ENCODE measurements at regions of chr5 and their contacts with region 1.

Region 1: DNA sequence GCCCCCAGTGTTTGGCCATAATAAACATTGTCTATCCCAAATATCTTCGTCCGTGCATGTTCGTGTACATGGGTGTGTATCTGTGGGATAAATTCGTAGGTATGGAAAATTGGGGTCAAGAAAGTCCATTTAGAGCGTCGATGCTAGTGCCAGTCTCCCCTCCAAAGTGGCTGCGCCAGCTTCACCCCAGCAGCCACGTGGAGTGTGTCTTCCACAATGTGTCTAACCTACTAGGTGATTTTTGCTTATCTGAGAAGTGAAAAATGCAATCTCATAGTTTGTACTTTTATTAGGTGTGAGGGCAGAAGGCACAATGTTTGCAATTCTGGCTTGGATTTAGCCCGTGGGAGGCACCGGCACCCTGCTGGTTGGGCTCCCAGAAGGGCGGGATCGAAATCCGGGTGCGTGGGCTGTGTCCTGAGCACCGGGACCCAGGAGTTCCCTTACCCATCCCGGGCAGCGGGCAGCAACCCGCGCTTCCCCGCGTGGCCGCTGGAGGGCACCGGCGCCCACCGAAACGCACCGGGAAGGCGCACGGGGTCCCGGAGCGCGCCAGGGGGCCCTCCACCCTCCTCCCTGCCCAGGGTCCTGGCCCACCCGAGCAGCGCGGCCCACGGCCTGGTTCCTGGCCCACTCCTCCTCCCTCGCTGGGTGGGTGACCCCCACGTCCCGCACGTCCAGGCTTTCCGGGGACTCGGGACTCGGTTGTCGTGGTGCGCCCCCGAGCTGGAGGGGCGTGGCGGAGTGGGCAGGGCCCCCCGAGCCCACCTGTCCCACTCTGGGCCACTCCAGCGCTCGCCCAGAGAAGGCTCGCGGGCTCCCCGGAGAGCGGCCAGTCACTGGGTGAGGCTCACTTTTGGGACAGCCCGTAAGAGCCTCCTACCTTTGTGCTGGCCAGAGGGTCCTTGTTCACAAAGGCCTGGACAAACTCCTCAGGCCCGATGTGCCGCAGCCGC is 55.4 kb upstream of the RNF130 start:
- DNase-seq: peak; percentile 15 to 49
- H3K4me3 ChIP-seq: peak overlapping the region in 1 of 3 donors; percentile 5
- H3K27ac ChIP-seq: no peak overlapping the region
- H3K4me1 ChIP-seq: peaks cover 0 to 6% of the 10 kb centered on the region in 2 donors
- H3K27me3 ChIP-seq: no peaks in the 10 kb centered on the region
- CTCF ChIP-seq: peak; percentile 16 to 60 (median 55)
- POLR2A ChIP-seq: no peak

Region 2: GRCh38 chr5:178757049-178757809 is 1369.8 kb before region 1 on chr5:
- intact Hi-C with region 1: loop called (anchors 10 kb)
- DNase-seq: no peak
- H3K4me3 ChIP-seq: no peak overlapping the region
- H3K27ac ChIP-seq: no peak overlapping the region
- H3K4me1 ChIP-seq: no peaks in the 10 kb centered on the region
- H3K27me3 ChIP-seq: no peaks in the 10 kb centered on the region
- CTCF ChIP-seq: no peak
- POLR2A ChIP-seq: no peak

Measured in breast epithelium (tissue), 4 donors.